ENCODE measurements at regions of chr3 and their contacts with region 1.

Region 1: DNA sequence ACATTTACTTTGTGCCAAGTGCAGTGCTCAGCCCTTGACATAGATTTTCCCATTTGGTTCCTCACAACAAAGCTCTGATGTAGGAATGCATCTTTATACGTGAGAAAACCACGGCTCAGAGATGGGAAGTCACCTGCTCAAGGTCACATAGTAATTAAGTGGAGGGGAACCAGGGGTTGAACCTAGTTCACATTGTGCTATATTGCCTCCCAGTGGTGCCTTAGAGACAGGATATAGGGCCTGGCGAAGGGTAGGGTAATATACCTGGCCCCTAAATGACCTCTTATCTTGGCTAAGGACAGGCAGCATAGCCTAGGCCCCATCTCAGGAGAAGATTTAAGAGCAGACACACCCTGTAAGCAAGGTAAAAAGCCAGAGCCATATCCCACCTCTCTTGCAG is 71.5 kb downstream of the FOXP1 start:
- DNase-seq: peak in 7 of 9 donors; percentile 60 to 76 (median 66)
- ATAC-seq: peak; percentile 96
- H3K4me3 ChIP-seq: no peak overlapping the region
- H3K4me3 Mint-ChIP-seq: peak overlapping the region in 7 of 10 donors; percentile 6 to 56 (median 44)
- H3K27ac ChIP-seq: peak overlapping the region; percentile 36
- H3K27ac Mint-ChIP-seq: peak overlapping the region in 5 of 9 donors; percentile 69 to 91 (median 83)
- H3K4me1 ChIP-seq: peaks cover 5 to 22% of the 10 kb centered on the region in 2 donors
- H3K4me1 Mint-ChIP-seq: peaks cover 11 to 54% (median 24%) of the 10 kb centered on the region in 7 donors
- H3K27me3 ChIP-seq: no peaks in the 10 kb centered on the region
- H3K27me3 Mint-ChIP-seq: no peaks in the 10 kb centered on the region

Region 2: DNA sequence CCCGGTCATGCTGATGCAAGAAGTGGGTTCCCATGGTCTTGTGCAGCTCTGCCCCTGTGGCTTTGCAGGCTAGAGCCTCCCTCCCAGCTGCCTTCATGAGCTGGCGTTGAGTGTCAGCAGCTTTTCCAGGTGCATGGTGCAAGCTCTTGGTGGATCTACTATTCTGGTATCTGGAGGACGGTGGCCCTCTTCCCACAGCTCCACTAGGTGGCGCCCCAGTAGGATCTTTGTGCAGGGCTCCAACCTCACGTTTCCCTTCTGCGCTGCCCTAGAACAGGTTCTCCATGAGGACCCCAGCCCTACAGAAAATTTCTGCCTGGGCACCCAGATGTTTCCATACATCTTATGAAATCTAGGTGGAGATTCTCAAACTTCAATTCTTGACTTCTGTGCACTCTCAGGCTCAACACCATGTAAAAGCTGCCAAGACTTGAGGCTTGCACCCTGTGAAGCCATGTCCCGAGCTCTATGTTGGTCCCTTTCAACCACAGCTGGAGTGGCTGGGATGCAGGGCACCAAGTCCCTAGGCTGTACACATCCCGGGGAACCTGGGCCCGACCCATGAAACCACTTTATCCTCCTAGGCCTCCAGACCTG is 961.2 kb before region 1 on chr3:
- CTCF ChIA-PET with region 1: interaction called, 5 read pairs
- POLR2A ChIA-PET with region 1: no interaction called
- intact Hi-C with region 1: loop called (anchors 1 to 2 kb)
- DNase-seq: peak; percentile 44 to 79 (median 69)
- ATAC-seq: peak; percentile 84
- H3K4me3 ChIP-seq: no peak overlapping the region
- H3K4me3 Mint-ChIP-seq: no peak overlapping the region
- H3K27ac ChIP-seq: no peak overlapping the region
- H3K27ac Mint-ChIP-seq: no peak overlapping the region
- H3K4me1 ChIP-seq: no peaks in the 10 kb centered on the region
- H3K4me1 Mint-ChIP-seq: peaks cover 0 to 1% (median 0%) of the 10 kb centered on the region in 7 donors
- H3K27me3 ChIP-seq: no peaks in the 10 kb centered on the region
- H3K27me3 Mint-ChIP-seq: peaks cover 0 to 13% (median 0%) of the 10 kb centered on the region in 5 donors

Region 3: DNA sequence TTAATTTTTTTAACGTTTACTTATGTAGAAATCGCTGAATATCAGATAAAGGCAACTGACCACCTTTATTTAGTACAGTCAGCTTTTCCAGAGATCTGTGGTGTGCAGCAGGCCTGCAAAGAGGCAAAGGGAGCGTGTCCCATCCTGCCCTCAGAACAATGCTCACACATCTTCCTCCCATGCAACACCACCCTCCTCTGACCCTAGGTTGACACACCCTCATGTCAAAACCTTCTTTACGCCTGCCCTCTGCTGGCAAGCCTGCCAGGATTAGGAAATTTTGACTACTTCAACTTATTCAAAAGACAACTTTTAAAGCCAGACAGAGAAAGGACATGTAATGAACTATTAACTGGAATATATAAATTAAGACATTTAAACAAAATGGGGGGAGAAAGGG is 442.2 kb before region 1 on chr3:
- CTCF ChIA-PET with region 1: interaction called, 3 read pairs
- POLR2A ChIA-PET with region 1: interaction called, 3 read pairs
- intact Hi-C with region 1: loop called (anchors 1 to 5 kb)
- DNase-seq: peak; percentile 26 to 72 (median 68)
- ATAC-seq: peak; percentile 60
- H3K4me3 ChIP-seq: no peak overlapping the region
- H3K4me3 Mint-ChIP-seq: peak overlapping the region in 7 of 10 donors; percentile 1 to 52 (median 37)
- H3K27ac ChIP-seq: peak overlapping the region; percentile 34
- H3K27ac Mint-ChIP-seq: peak overlapping the region in 8 of 9 donors; percentile 76 to 91 (median 84)
- H3K4me1 ChIP-seq: peaks cover 44 to 81% of the 10 kb centered on the region in 2 donors
- H3K4me1 Mint-ChIP-seq: peaks cover 55 to 90% (median 86%) of the 10 kb centered on the region in 7 donors
- H3K27me3 ChIP-seq: no peaks in the 10 kb centered on the region
- H3K27me3 Mint-ChIP-seq: no peaks in the 10 kb centered on the region

Region 4: GRCh38 chr3:71226565-71227269 is 285.3 kb before region 1 on chr3:
- CTCF ChIA-PET with region 1: interaction called, 3 read pairs
- POLR2A ChIA-PET with region 1: no interaction called
- intact Hi-C with region 1: loop called (anchors 2 to 5 kb)
- DNase-seq: peak; percentile 34 to 89 (median 65)
- ATAC-seq: peak; percentile 86
- H3K4me3 ChIP-seq: peak overlapping the region; percentile 48
- H3K4me3 Mint-ChIP-seq: peak overlapping the region; percentile 51 to 85 (median 79)
- H3K27ac ChIP-seq: peak overlapping the region; percentile 59
- H3K27ac Mint-ChIP-seq: peak overlapping the region; percentile 85 to 97 (median 90)
- H3K4me1 ChIP-seq: peaks cover 21 to 64% of the 10 kb centered on the region in 2 donors
- H3K4me1 Mint-ChIP-seq: peaks cover 30 to 91% (median 88%) of the 10 kb centered on the region in 7 donors
- H3K27me3 ChIP-seq: no peaks in the 10 kb centered on the region
- H3K27me3 Mint-ChIP-seq: peaks cover 0 to 52% (median 0%) of the 10 kb centered on the region in 5 donors

Region 5: GRCh38 chr3:71389911-71390573 is 122.0 kb before region 1 on chr3:
- CTCF ChIA-PET with region 1: no interaction called
- POLR2A ChIA-PET with region 1: no interaction called
- intact Hi-C with region 1: loop called in 1 of 2 experiments (anchors 2 kb)
- DNase-seq: peak in 8 of 9 donors; percentile 25 to 67 (median 49)
- ATAC-seq: peak; percentile 55
- H3K4me3 ChIP-seq: peak overlapping the region; percentile 51
- H3K4me3 Mint-ChIP-seq: peak overlapping the region; percentile 68 to 88 (median 83)
- H3K27ac ChIP-seq: peak overlapping the region; percentile 81
- H3K27ac Mint-ChIP-seq: peak overlapping the region; percentile 75 to 99 (median 90)
- H3K4me1 ChIP-seq: peaks cover 29 to 74% of the 10 kb centered on the region in 2 donors
- H3K4me1 Mint-ChIP-seq: peaks cover 27 to 93% (median 83%) of the 10 kb centered on the region in 7 donors
- H3K27me3 ChIP-seq: no peaks in the 10 kb centered on the region
- H3K27me3 Mint-ChIP-seq: peaks cover 0 to 22% (median 0%) of the 10 kb centered on the region in 5 donors

Region 6: DNA sequence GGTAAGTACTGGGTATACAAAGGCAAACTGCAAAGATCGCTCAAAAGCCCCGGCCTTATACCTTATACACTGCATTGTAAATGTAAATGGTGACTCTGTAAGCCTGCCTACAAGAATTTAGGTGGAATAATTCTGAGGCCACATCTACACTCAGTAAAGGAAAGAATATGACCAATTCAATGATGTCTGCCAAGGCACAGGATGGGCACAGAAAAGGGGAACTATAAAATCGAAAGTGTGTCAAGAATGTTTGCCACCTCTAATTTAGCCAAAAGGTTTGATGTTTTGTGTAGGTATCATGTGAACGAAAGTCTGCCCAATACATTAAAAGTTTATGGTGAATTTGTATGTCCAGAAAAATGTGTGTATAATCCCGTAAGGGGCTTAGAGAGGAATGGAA is 24.6 kb before region 1 on chr3:
- CTCF ChIA-PET with region 1: interaction called, 4 read pairs
- POLR2A ChIA-PET with region 1: interaction called, 4 read pairs
- intact Hi-C with region 1: loop called in 1 of 2 experiments (anchors 1 kb)
- DNase-seq: peak in 2 of 9 donors; percentile 23 to 32
- ATAC-seq: no peak
- H3K4me3 ChIP-seq: peak overlapping the region; percentile 19
- H3K4me3 Mint-ChIP-seq: peak overlapping the region; percentile 70 to 98 (median 88)
- H3K27ac ChIP-seq: peak overlapping the region; percentile 89
- H3K27ac Mint-ChIP-seq: peak overlapping the region; percentile 79 to 100 (median 98)
- H3K4me1 ChIP-seq: peaks cover 66 to 93% of the 10 kb centered on the region in 2 donors
- H3K4me1 Mint-ChIP-seq: peaks cover 44 to 94% (median 88%) of the 10 kb centered on the region in 7 donors
- H3K27me3 ChIP-seq: no peaks in the 10 kb centered on the region
- H3K27me3 Mint-ChIP-seq: peaks cover 0 to 3% (median 0%) of the 10 kb centered on the region in 5 donors

Region 7: DNA sequence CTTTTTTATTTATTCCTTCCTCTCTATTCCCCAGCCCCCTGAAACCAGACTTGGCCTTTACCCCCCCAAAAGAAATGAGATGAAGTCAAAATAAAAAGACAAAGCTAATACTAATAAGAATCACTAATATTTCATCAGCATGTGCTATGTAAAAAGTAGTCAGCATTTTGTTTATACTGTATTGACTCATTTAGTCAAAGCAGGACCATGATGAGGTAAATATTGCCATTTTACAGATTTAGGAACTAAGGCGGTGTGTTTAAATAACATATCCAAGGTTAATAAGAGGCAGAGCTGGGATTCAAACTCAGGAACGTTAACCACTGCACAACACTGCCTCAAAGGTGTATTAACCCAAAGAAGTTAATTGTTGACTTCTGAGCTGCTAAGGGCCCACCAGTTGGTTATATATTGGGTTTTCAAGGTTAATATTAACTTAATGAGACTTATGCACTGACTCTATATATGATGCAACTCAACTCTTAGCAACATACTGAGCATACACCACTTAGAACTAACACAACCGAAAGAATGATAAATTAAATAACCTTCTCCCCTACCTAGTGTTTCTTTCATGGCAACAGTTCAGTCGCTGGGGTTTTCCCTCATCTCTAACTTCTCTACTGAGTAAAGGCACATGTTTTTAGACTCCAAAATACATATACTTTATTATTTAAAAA is 36.8 kb after region 1 on chr3:
- CTCF ChIA-PET with region 1: no interaction called
- POLR2A ChIA-PET with region 1: no interaction called
- intact Hi-C with region 1: no loop called
- DNase-seq: no peak
- ATAC-seq: no peak
- H3K4me3 ChIP-seq: no peak overlapping the region
- H3K4me3 Mint-ChIP-seq: no peak overlapping the region
- H3K27ac ChIP-seq: no peak overlapping the region
- H3K27ac Mint-ChIP-seq: no peak overlapping the region
- H3K4me1 ChIP-seq: no peaks in the 10 kb centered on the region
- H3K4me1 Mint-ChIP-seq: peaks cover 0 to 8% (median 0%) of the 10 kb centered on the region in 7 donors
- H3K27me3 ChIP-seq: no peaks in the 10 kb centered on the region
- H3K27me3 Mint-ChIP-seq: peaks cover 0 to 4% (median 0%) of the 10 kb centered on the region in 5 donors